CD4-positive, alpha-beta memory T cell (primary cell): ENCODE measurements at regions of chr9 and their contacts with region 1.

Region 1: DNA sequence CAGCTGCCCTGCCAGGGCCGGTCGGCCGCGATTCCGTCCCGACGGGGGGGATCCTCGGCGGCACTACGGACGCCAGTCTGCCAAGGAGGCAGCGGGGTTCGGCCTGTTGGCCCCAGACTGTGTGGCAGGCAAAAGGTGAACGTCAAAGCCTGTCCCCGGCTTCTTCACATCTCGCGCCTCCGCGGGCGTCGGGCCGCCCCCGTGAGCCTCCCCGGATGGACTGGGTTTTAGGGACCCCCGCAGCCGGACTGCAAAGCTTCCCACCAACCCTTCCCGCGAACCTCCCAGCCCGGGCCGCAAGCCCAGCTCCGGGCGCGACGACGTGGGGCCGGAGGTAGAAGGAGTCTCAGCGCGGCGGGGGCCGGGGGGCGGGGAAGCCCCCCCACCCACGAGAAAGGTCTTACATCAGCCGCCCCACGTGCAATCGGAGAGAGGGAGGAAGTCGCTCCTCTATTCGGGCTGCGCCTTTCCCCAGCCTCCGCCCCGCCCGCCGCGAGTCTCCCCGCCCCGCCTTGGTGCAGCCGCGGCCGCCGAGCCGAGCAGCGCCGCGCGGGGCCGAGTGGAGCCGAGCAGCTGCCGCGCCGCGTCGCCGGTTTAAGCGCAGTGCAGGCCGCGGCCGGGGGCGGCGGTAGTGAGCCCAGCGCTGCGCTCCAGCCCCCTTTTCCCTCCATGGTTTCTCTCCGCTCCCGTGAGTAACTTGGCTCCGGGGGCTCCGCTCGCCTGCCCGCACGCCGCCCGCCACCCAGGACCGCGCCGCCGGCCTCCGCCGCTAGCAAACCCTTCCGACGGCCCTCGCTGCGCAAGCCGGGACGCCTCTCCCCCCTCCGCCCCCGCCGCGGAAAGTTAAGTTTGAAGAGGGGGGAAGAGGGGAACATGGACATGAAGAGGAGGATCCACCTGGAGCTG is at the start of gene ANP32B:
- DNase-seq: peak; percentile 92 to 95 (median 94)
- H3K4me3 ChIP-seq: peak within 1 kb of the TSS; percentile 54 to 81
- H3K4me3 Mint-ChIP-seq: peak within 1 kb of the TSS; percentile 77 to 94 (median 86)
- H3K27ac ChIP-seq: peak within 1 kb of the TSS; percentile 85
- H3K27ac Mint-ChIP-seq: peak within 1 kb of the TSS; percentile 81 to 91 (median 89)
- H3K4me1 ChIP-seq: peaks cover 37% of the 10 kb centered on the region
- H3K4me1 Mint-ChIP-seq: peaks cover 17 to 47% (median 31%) of the 10 kb centered on the region in 4 donors
- H3K27me3 ChIP-seq: no peaks in the 10 kb centered on the region
- H3K27me3 Mint-ChIP-seq: no peaks in the 10 kb centered on the region
- total RNA-seq, gene ANP32B: 164 to 168 TPM

Region 2: GRCh38 chr9:97900738-97901565 is 82.0 kb before region 1 on chr9:
- CTCF ChIA-PET with region 1: interaction called, 4 read pairs
- POLR2A ChIA-PET with region 1: interaction called, 55 read pairs
- intact Hi-C with region 1: no loop called
- DNase-seq: peak; percentile 39 to 54 (median 43)
- H3K4me3 ChIP-seq: no peak overlapping the region
- H3K4me3 Mint-ChIP-seq: peak overlapping the region in 3 of 8 donors; percentile 20 to 59 (median 43)
- H3K27ac ChIP-seq: peak overlapping the region; percentile 21
- H3K27ac Mint-ChIP-seq: peak overlapping the region; percentile 75 to 93 (median 92)
- H3K4me1 ChIP-seq: peaks cover 59% of the 10 kb centered on the region
- H3K4me1 Mint-ChIP-seq: peaks cover 33 to 63% (median 45%) of the 10 kb centered on the region in 4 donors
- H3K27me3 ChIP-seq: no peaks in the 10 kb centered on the region
- H3K27me3 Mint-ChIP-seq: no peaks in the 10 kb centered on the region

Region 3: DNA sequence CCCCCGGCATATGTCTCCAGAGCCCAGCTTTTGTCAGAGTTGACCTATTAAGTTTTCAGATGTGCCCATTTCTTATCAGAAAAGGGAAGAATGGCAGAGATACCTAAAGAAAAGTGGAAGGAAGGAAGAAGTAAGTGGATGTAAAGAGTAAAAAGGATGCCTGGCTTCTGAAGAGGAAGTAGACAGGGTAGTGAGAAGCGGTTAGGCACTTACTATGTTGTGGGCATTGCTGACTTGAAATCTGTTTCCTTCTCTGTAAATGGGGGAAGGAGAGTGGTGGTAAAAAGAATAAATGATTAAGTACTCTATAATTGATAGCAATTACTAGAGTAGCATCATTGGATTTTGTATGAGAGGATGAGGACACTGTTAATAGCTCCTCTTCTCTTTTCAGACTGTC is 10.1 kb after region 1 on chr9:
- CTCF ChIA-PET with region 1: interaction called, 11 read pairs
- POLR2A ChIA-PET with region 1: interaction called, 32 read pairs
- intact Hi-C with region 1: loop called (anchors 1 kb)
- DNase-seq: peak in 3 of 5 donors; percentile 14 to 38 (median 19)
- H3K4me3 ChIP-seq: no peak overlapping the region
- H3K4me3 Mint-ChIP-seq: peak overlapping the region in 6 of 8 donors; percentile 3 to 67 (median 38)
- H3K27ac ChIP-seq: no peak overlapping the region
- H3K27ac Mint-ChIP-seq: peak overlapping the region in 6 of 7 donors; percentile 17 to 81 (median 56)
- H3K4me1 ChIP-seq: peaks cover 60% of the 10 kb centered on the region
- H3K4me1 Mint-ChIP-seq: peaks cover 57 to 89% (median 71%) of the 10 kb centered on the region in 4 donors
- H3K27me3 ChIP-seq: no peaks in the 10 kb centered on the region
- H3K27me3 Mint-ChIP-seq: no peaks in the 10 kb centered on the region

Region 4: GRCh38 chr9:98045234-98046179 is 62.6 kb after region 1 on chr9:
- CTCF ChIA-PET with region 1: interaction called, 3 read pairs
- POLR2A ChIA-PET with region 1: interaction called, 13 read pairs
- intact Hi-C with region 1: no loop called
- DNase-seq: peak; percentile 60 to 80 (median 71)
- H3K4me3 ChIP-seq: peak overlapping the region; percentile 9 to 15
- H3K4me3 Mint-ChIP-seq: peak overlapping the region; percentile 65 to 88 (median 80)
- H3K27ac ChIP-seq: peak overlapping the region; percentile 9
- H3K27ac Mint-ChIP-seq: peak overlapping the region; percentile 29 to 97 (median 89)
- H3K4me1 ChIP-seq: peaks cover 22% of the 10 kb centered on the region
- H3K4me1 Mint-ChIP-seq: peaks cover 11 to 31% (median 15%) of the 10 kb centered on the region in 4 donors
- H3K27me3 ChIP-seq: no peaks in the 10 kb centered on the region
- H3K27me3 Mint-ChIP-seq: no peaks in the 10 kb centered on the region

Region 5: GRCh38 chr9:98118640-98119601 is 136.0 kb after region 1 on chr9 and contains the start of gene TRIM14:
- CTCF ChIA-PET with region 1: interaction called, 4 read pairs
- POLR2A ChIA-PET with region 1: interaction called, 10 read pairs
- intact Hi-C with region 1: no loop called
- DNase-seq: peak; percentile 35 to 71 (median 45)
- H3K4me3 ChIP-seq: peak within 1 kb of the TSS; percentile 70 to 87
- H3K4me3 Mint-ChIP-seq: peak within 1 kb of the TSS; percentile 87 to 96 (median 92)
- H3K27ac ChIP-seq: peak within 1 kb of the TSS; percentile 92
- H3K27ac Mint-ChIP-seq: peak within 1 kb of the TSS; percentile 89 to 99 (median 95)
- H3K4me1 ChIP-seq: peaks cover 70% of the 10 kb centered on the region
- H3K4me1 Mint-ChIP-seq: peaks cover 37 to 65% (median 50%) of the 10 kb centered on the region in 4 donors
- H3K27me3 ChIP-seq: no peaks in the 10 kb centered on the region
- H3K27me3 Mint-ChIP-seq: no peaks in the 10 kb centered on the region
- total RNA-seq, gene TRIM14: 86.1 to 86.2 TPM

Region 6: GRCh38 chr9:98536542-98537173 is 553.7 kb after region 1 on chr9:
- CTCF ChIA-PET with region 1: no interaction called
- POLR2A ChIA-PET with region 1: no interaction called
- intact Hi-C with region 1: no loop called
- DNase-seq: no peak
- H3K4me3 ChIP-seq: no peak overlapping the region
- H3K4me3 Mint-ChIP-seq: no peak overlapping the region
- H3K27ac ChIP-seq: no peak overlapping the region
- H3K27ac Mint-ChIP-seq: no peak overlapping the region
- H3K4me1 ChIP-seq: no peaks in the 10 kb centered on the region
- H3K4me1 Mint-ChIP-seq: no peaks in the 10 kb centered on the region
- H3K27me3 ChIP-seq: no peaks in the 10 kb centered on the region
- H3K27me3 Mint-ChIP-seq: peaks cover 0 to 4% of the 10 kb centered on the region in 2 donors